B cell (primary cell): ENCODE measurements at regions of chr17 and their contacts with region 1.

Region 1: DNA sequence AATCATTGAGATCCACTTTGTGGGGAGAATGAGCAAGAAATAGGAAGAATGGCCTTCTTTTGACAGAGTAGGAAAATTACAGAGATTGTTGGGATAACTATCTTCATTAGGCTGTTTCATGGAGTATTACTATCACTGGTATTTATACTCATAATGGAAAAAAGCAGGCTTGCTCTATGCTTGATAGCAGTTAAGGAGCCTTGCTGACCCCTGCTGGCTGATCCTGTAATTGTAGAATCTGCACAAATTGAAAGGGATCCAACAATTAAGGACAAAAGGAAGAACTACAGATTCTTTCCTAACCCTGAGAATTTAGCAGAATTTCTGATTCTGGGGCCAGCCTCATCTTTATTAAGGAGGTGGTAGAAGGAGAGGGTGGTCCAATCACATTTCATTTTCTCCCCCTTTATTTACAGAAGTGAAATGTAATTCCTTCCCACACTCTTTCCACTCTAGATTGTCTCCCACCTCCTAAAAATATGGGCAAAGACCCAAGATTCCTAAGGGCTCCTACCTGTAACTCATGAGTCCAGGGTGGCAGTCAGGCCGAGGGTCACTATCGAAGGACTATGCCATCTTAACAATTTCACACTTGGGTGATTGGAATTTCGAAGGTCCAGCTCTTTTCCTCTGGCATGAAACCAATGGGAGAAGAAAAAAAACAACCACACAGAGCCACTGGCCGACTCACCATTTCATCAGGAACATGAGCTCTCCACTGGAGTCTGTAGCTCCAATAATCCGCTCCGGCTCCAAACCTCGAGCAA is 26.3 kb downstream of the NFE2L1 start:
- DNase-seq: peak; percentile 81
- ATAC-seq: peak; percentile 77
- H3K4me3 ChIP-seq: no peak overlapping the region
- H3K4me3 Mint-ChIP-seq: no peak overlapping the region
- H3K27ac ChIP-seq: no peak overlapping the region
- H3K27ac Mint-ChIP-seq: no peak overlapping the region
- H3K4me1 ChIP-seq: no peaks in the 10 kb centered on the region
- H3K4me1 Mint-ChIP-seq: no peaks in the 10 kb centered on the region
- H3K27me3 ChIP-seq: no peaks in the 10 kb centered on the region
- H3K27me3 Mint-ChIP-seq: no peaks in the 10 kb centered on the region
- CTCF ChIP-seq: peak; percentile 90

Region 2: GRCh38 chr17:47978324-47978723 is 96.2 kb before region 1 on chr17:
- CTCF ChIA-PET with region 1: interaction called, 15 read pairs
- POLR2A ChIA-PET with region 1: no interaction called
- intact Hi-C with region 1: loop called (anchors 1 kb)
- DNase-seq: peak; percentile 67
- ATAC-seq: peak; percentile 88
- H3K4me3 ChIP-seq: no peak overlapping the region
- H3K4me3 Mint-ChIP-seq: no peak overlapping the region
- H3K27ac ChIP-seq: no peak overlapping the region
- H3K27ac Mint-ChIP-seq: no peak overlapping the region
- H3K4me1 ChIP-seq: no peaks in the 10 kb centered on the region
- H3K4me1 Mint-ChIP-seq: peaks cover 2% of the 10 kb centered on the region
- H3K27me3 ChIP-seq: no peaks in the 10 kb centered on the region
- H3K27me3 Mint-ChIP-seq: no peaks in the 10 kb centered on the region
- CTCF ChIP-seq: peak; percentile 77

Region 3: GRCh38 chr17:48030531-48030930 is 44.0 kb before region 1 on chr17:
- CTCF ChIA-PET with region 1: interaction called, 228 read pairs
- POLR2A ChIA-PET with region 1: no interaction called
- intact Hi-C with region 1: loop called (anchors 1 kb)
- DNase-seq: no peak
- ATAC-seq: no peak
- H3K4me3 ChIP-seq: no peak overlapping the region
- H3K4me3 Mint-ChIP-seq: no peak overlapping the region
- H3K27ac ChIP-seq: no peak overlapping the region
- H3K27ac Mint-ChIP-seq: no peak overlapping the region
- H3K4me1 ChIP-seq: peaks cover 12% of the 10 kb centered on the region in 2 donors
- H3K4me1 Mint-ChIP-seq: peaks cover 15% of the 10 kb centered on the region
- H3K27me3 ChIP-seq: peaks cover 0 to 27% (median 5%) of the 10 kb centered on the region in 4 experiments
- H3K27me3 Mint-ChIP-seq: peaks cover 22% of the 10 kb centered on the region
- CTCF ChIP-seq: no peak

Region 4: GRCh38 chr17:48047741-48048383 is 26.6 kb before region 1 on chr17 and contains the start of gene NFE2L1:
- CTCF ChIA-PET with region 1: interaction called, 28 read pairs
- POLR2A ChIA-PET with region 1: interaction called, 3 read pairs
- intact Hi-C with region 1: loop called (anchors 1 kb)
- DNase-seq: peak; percentile 98
- ATAC-seq: peak; percentile 94
- H3K4me3 ChIP-seq: peak within 1 kb of the TSS; percentile 63 to 84 (median 78)
- H3K4me3 Mint-ChIP-seq: peak within 1 kb of the TSS; percentile 97
- H3K27ac ChIP-seq: peak within 1 kb of the TSS; percentile 87 to 90
- H3K27ac Mint-ChIP-seq: peak within 1 kb of the TSS; percentile 100
- H3K4me1 ChIP-seq: peaks cover 30 to 35% of the 10 kb centered on the region in 2 donors
- H3K4me1 Mint-ChIP-seq: peaks cover 52% of the 10 kb centered on the region
- H3K27me3 ChIP-seq: no peaks in the 10 kb centered on the region
- H3K27me3 Mint-ChIP-seq: no peaks in the 10 kb centered on the region
- CTCF ChIP-seq: no peak
- total RNA-seq, gene NFE2L1: 58.1 and 66.4 TPM in 2 replicates

Region 5: DNA sequence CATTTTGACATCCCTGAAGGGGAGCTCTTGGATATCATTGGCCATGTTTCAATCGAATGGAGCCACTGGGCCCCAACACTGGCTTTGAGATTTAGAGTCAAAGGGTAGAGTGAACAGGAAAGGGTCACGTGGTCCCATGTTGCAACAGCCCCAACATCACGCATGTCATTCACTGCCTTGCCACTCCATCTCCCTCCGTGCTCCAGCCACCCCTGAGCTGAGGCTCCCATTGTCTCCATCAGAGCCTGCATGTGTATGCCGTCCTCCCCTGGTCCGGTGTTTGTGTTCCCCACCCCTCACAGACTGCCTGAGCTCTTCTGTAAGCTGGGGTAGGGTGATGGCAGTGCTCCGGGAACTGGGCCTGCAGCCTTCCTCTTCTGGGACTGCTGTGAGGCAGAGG is 14.2 kb before region 1 on chr17:
- CTCF ChIA-PET with region 1: interaction called, 28 read pairs
- POLR2A ChIA-PET with region 1: no interaction called
- intact Hi-C with region 1: no loop called
- DNase-seq: no peak
- ATAC-seq: no peak
- H3K4me3 ChIP-seq: no peak overlapping the region
- H3K4me3 Mint-ChIP-seq: no peak overlapping the region
- H3K27ac ChIP-seq: no peak overlapping the region
- H3K27ac Mint-ChIP-seq: no peak overlapping the region
- H3K4me1 ChIP-seq: peaks cover 12 to 15% of the 10 kb centered on the region in 2 donors
- H3K4me1 Mint-ChIP-seq: peaks cover 15% of the 10 kb centered on the region
- H3K27me3 ChIP-seq: no peaks in the 10 kb centered on the region
- H3K27me3 Mint-ChIP-seq: no peaks in the 10 kb centered on the region
- CTCF ChIP-seq: no peak

Region 6: GRCh38 chr17:48113201-48113676 is 38.7 kb after region 1 on chr17:
- CTCF ChIA-PET with region 1: interaction called, 41 read pairs
- POLR2A ChIA-PET with region 1: no interaction called
- intact Hi-C with region 1: no loop called
- DNase-seq: peak; percentile 66
- ATAC-seq: no peak
- H3K4me3 ChIP-seq: peak overlapping the region in 4 of 5 experiments; percentile 1 to 32 (median 12)
- H3K4me3 Mint-ChIP-seq: peak overlapping the region; percentile 81
- H3K27ac ChIP-seq: peak overlapping the region; percentile 67 to 96
- H3K27ac Mint-ChIP-seq: peak overlapping the region; percentile 91
- H3K4me1 ChIP-seq: peaks cover 53 to 64% of the 10 kb centered on the region in 2 donors
- H3K4me1 Mint-ChIP-seq: peaks cover 45% of the 10 kb centered on the region
- H3K27me3 ChIP-seq: no peaks in the 10 kb centered on the region
- H3K27me3 Mint-ChIP-seq: no peaks in the 10 kb centered on the region
- CTCF ChIP-seq: no peak

Region 7: GRCh38 chr17:48228721-48229120 is 154.2 kb after region 1 on chr17:
- CTCF ChIA-PET with region 1: no interaction called
- POLR2A ChIA-PET with region 1: no interaction called
- intact Hi-C with region 1: no loop called
- DNase-seq: no peak
- ATAC-seq: no peak
- H3K4me3 ChIP-seq: no peak overlapping the region
- H3K4me3 Mint-ChIP-seq: no peak overlapping the region
- H3K27ac ChIP-seq: no peak overlapping the region
- H3K27ac Mint-ChIP-seq: no peak overlapping the region
- H3K4me1 ChIP-seq: no peaks in the 10 kb centered on the region
- H3K4me1 Mint-ChIP-seq: no peaks in the 10 kb centered on the region
- H3K27me3 ChIP-seq: no peaks in the 10 kb centered on the region
- H3K27me3 Mint-ChIP-seq: no peaks in the 10 kb centered on the region
- CTCF ChIP-seq: no peak